Breast epithelium (tissue), 4 donors: ENCODE measurements at regions of chr14 and their contacts with region 1.

Region 1: DNA sequence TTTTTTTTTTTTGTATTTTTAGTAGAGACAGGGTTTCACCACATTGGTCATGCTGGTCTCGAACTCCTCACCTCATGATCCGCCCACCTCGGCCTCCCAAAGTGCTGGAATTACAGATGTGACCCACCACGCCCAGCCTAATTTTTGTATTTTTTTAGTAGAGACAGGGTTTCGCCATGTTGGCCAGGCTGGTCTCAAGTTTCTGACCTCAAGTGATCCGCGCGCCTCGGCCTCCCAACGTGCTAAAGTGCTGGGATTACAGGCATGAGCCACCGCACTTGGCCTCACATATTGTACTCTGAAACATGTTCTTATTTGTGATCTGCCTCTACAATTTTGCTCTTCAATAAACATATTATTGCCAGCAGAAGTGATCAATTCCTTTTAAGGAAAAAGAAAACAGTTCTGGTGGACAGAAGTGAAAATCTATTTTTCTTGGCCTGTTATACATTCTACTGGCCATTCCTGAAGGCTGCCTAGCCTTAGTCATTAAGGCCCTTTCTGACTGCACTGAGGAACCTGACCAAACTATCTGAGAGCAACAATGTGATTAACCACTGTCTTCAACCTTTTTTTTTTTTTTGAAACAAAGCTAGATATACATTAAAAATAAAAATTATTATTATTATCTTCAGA is 36.1 kb downstream of the SNX6 start:
- DNase-seq: no peak
- H3K4me3 ChIP-seq: no peak overlapping the region
- H3K27ac ChIP-seq: no peak overlapping the region
- H3K4me1 ChIP-seq: no peaks in the 10 kb centered on the region
- H3K27me3 ChIP-seq: no peaks in the 10 kb centered on the region
- CTCF ChIP-seq: no peak
- POLR2A ChIP-seq: no peak

Region 2: GRCh38 chr14:33972583-33973081 is 621.2 kb before region 1 on chr14:
- intact Hi-C with region 1: no loop called
- DNase-seq: no peak
- H3K4me3 ChIP-seq: no peak overlapping the region
- H3K27ac ChIP-seq: no peak overlapping the region
- H3K4me1 ChIP-seq: no peaks in the 10 kb centered on the region
- H3K27me3 ChIP-seq: no peaks in the 10 kb centered on the region
- CTCF ChIP-seq: no peak
- POLR2A ChIP-seq: no peak

Region 3: GRCh38 chr14:34655959-34656358 is 62.1 kb after region 1 on chr14:
- intact Hi-C with region 1: loop called (anchors 2 kb)
- DNase-seq: no peak
- H3K4me3 ChIP-seq: no peak overlapping the region
- H3K27ac ChIP-seq: no peak overlapping the region
- H3K4me1 ChIP-seq: no peaks in the 10 kb centered on the region
- H3K27me3 ChIP-seq: no peaks in the 10 kb centered on the region
- CTCF ChIP-seq: no peak
- POLR2A ChIP-seq: no peak